ENCODE measurements at regions of chr12 and their contacts with region 1.

Region 1: GRCh38 chr12:120598674-120599463 is 17.7 kb upstream of the POP5 start:
- DNase-seq: peak; percentile 72
- H3K4me3 ChIP-seq: no peak overlapping the region
- H3K27ac ChIP-seq: no peak overlapping the region
- H3K4me1 ChIP-seq: no peaks in the 10 kb centered on the region
- H3K27me3 ChIP-seq: peaks cover 28% of the 10 kb centered on the region; the same call in 1 of the 2 replicates

Region 2: DNA sequence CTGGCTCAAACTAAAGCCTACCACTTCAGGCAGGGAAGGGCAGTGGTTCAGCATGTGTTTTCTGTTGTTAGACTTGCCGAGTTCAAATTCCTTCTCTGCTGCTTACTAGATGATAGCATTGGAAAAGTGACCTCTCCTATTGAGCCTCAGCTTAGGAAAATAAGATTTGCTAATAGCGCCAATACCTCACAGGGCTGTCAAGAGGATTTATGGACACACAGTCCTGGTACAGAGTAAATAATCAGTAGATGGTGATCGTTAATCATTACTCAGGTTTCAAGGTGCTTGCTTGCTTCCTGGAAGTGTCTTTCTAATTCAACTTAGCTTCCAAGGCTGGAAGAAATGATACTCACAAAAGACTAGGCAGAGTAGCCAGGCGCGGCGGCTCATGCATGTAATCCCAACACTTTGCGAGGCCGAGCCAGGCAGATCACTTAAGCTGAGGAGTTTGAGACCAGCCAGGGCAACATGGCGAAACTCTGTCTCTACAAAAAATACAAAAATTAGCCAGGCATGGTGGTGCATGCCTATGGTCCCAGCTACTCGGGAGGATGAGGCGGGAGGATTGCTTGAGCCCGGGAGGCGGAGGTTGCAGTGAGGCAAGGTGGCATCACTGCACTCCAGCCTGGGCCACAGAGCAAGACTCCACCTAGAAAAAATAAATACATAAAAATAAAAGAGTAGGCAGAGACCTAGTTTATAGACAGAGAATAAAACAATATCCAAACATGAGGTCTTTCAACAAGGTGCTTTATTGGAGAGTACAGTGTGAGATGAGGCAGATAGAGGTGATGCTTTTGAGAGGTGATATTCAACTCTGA is 277.3 kb before region 1 on chr12:
- in situ Hi-C with region 1: no loop called
- DNase-seq: no peak
- H3K4me3 ChIP-seq: no peak overlapping the region
- H3K27ac ChIP-seq: no peak overlapping the region
- H3K4me1 ChIP-seq: peaks cover 4% of the 10 kb centered on the region
- H3K27me3 ChIP-seq: no peaks in the 10 kb centered on the region

Region 3: DNA sequence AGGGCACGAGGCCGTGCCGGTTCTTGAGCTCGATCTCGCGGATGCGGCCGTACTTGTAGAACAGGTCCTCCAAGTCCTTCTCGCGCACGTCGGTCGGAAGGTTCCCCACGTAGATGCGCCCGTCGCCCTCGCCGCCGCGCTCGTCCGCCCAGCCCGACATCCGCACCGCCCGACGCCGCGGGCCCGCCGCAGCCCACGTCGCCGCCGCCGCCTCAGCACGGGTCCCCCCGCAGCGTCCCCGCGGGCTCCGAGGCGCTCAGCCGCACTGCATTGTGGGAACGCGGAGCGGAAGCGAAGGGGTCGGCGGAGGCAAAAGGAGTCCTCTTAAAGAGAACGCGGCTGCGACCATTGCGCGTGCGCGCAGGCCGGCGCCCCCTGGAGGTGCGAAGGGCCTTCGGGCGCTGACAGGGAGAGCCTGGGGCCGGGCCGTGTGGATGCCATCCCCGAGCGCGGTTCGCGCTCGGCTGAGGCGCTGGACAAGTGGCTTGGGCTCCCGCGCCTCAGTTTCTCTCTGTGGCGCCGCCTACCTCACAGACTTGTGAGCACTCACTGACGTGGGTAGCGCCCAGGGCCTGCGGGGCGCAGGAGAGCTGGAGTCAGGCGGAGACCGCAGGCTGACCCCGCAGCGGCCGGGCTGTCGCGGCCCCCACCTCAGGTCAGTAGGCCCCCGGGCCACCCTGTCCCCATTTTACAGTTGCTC is 129.3 kb before region 1 on chr12 and contains the start of gene SRSF9:
- in situ Hi-C with region 1: no loop called
- DNase-seq: peak; percentile 98
- H3K4me3 ChIP-seq: peak within 1 kb of the TSS; percentile 92
- H3K27ac ChIP-seq: peak within 1 kb of the TSS; percentile 79
- H3K4me1 ChIP-seq: peaks cover 40% of the 10 kb centered on the region
- H3K27me3 ChIP-seq: no peaks in the 10 kb centered on the region
- total RNA-seq, gene SRSF9: 129 and 154 TPM in 2 replicates

Region 4: DNA sequence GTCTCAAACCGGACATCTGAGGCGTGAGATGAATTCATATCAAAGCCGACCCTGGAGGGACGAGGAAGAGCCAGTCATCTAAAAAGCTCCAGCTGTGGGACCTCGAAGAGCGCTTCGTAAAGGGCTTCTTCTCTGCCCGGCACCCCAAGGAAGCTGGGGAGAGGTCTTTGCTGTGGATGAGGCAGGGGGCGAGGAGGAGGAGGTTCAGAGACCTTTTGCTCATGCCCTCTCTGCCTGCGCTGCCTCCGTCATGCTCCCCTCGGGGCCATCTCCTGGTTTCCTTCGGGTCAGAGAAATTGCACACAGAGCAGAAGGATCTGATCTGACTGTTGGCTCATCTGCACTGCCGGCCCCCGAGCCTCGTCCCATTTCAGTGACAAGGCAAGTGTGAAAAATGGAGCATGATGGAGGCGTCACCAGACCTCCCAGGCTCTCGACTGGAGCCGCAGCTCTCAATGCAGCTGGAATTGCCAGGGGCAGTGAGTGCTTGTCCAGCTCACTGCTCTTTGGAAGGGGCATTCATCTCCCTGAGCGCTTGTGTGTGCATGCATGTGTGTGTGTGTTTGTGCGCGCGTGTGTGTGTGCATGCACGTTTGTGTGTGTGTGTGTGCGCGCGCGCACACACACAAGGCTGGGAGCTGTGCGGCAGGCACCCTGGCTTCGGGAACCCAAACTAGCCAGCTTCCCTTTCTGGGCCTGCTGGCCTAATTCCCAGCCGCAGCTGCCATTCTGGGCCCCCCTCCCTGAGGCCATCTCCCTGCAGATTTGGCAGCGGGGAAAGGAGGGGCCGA is 50.8 kb after region 1 on chr12:
- in situ Hi-C with region 1: no loop called
- DNase-seq: peak; percentile 33
- H3K4me3 ChIP-seq: peak overlapping the region; percentile 76
- H3K27ac ChIP-seq: no peak overlapping the region
- H3K4me1 ChIP-seq: 0 out of 2 replicates have a peak, but pooled peaks cover 4% of the 10 kb centered on the region
- H3K27me3 ChIP-seq: peaks cover 49% of the 10 kb centered on the region

Region 5: GRCh38 chr12:120955232-120955631 is 356.4 kb after region 1 on chr12:
- in situ Hi-C with region 1: loop called (anchors 10 kb)
- DNase-seq: no peak
- H3K4me3 ChIP-seq: no peak overlapping the region
- H3K27ac ChIP-seq: no peak overlapping the region
- H3K4me1 ChIP-seq: no peaks in the 10 kb centered on the region
- H3K27me3 ChIP-seq: no peaks in the 10 kb centered on the region

Measured in GM23248 (cell line).